ENCODE measurements at regions of chr7 and their contacts with region 1.

Region 1: GRCh38 chr7:18590744-18591340 is 95.3 kb downstream of the HDAC9 start:
- DNase-seq: peak; percentile 57
- H3K4me3 Mint-ChIP-seq: no peak overlapping the region
- H3K27ac Mint-ChIP-seq: no peak overlapping the region
- H3K4me1 Mint-ChIP-seq: no peaks in the 10 kb centered on the region
- H3K27me3 Mint-ChIP-seq: no peaks in the 10 kb centered on the region
- CTCF ChIP-seq: peak; percentile 54

Region 2: GRCh38 chr7:18481776-18482175 is 109.1 kb before region 1 on chr7:
- CTCF ChIA-PET with region 1: no interaction called
- POLR2A ChIA-PET with region 1: no interaction called
- intact Hi-C with region 1: no loop called
- DNase-seq: no peak
- H3K4me3 Mint-ChIP-seq: no peak overlapping the region
- H3K27ac Mint-ChIP-seq: no peak overlapping the region
- H3K4me1 Mint-ChIP-seq: no peaks in the 10 kb centered on the region
- H3K27me3 Mint-ChIP-seq: no peaks in the 10 kb centered on the region
- CTCF ChIP-seq: no peak

Region 3: GRCh38 chr7:18666107-18666728 is 75.4 kb after region 1 on chr7:
- CTCF ChIA-PET with region 1: interaction called, 17 read pairs
- POLR2A ChIA-PET with region 1: interaction called, 3 read pairs
- intact Hi-C with region 1: loop called (anchors 2 kb)
- DNase-seq: peak; percentile 80
- H3K4me3 Mint-ChIP-seq: no peak overlapping the region
- H3K27ac Mint-ChIP-seq: no peak overlapping the region
- H3K4me1 Mint-ChIP-seq: peaks cover under 1% of the 10 kb centered on the region
- H3K27me3 Mint-ChIP-seq: no peaks in the 10 kb centered on the region
- CTCF ChIP-seq: peak; percentile 71

Region 4: DNA sequence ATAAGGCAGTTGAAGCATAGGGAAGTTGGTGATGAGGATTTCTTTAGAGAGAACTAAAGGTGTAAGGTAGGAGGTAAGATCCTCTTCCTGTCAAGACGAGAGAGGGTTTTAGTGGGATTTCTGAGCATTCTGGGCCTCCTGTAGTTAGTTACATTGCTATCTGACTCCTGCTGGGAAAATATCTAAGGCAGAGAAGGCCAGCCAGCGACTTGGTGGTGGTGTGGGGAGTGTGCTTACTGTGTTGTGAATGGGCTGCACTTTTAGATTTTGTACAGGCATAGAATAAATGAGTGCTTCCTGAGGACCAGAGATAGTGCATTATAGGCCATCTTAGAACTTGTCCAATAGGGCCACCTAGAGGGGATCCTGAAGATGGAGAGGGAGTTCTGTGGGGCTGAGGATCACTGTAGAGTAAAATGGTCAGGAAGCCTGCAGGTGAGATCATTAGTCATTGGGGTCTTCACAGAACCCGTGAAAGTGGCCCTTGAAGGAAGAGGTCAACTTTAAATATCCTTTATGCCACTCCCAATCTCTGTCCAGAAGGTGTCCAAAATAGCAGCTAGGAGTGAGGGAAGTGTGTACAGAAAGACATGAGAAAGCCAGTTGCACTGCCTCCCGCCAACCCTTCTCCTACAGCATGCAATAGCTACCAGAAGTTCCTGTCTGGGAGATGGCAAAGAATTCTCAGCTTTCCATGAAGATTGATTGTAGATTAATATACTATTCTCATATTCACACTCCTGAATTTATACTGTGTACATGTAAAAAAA is 851.4 kb after region 1 on chr7:
- CTCF ChIA-PET with region 1: interaction called, 3 read pairs
- POLR2A ChIA-PET with region 1: no interaction called
- intact Hi-C with region 1: loop called (anchors 2 kb)
- DNase-seq: peak; percentile 67
- H3K4me3 Mint-ChIP-seq: no peak overlapping the region
- H3K27ac Mint-ChIP-seq: no peak overlapping the region
- H3K4me1 Mint-ChIP-seq: peaks cover 6% of the 10 kb centered on the region
- H3K27me3 Mint-ChIP-seq: no peaks in the 10 kb centered on the region
- CTCF ChIP-seq: peak; percentile 46

Region 5: GRCh38 chr7:19621740-19622139 is 1030.9 kb after region 1 on chr7:
- CTCF ChIA-PET with region 1: interaction called, 16 read pairs
- POLR2A ChIA-PET with region 1: interaction called, 4 read pairs
- intact Hi-C with region 1: loop called (anchors 5 kb)
- DNase-seq: peak; percentile 67
- H3K4me3 Mint-ChIP-seq: no peak overlapping the region
- H3K27ac Mint-ChIP-seq: peak overlapping the region; percentile 89
- H3K4me1 Mint-ChIP-seq: peaks cover 33% of the 10 kb centered on the region
- H3K27me3 Mint-ChIP-seq: no peaks in the 10 kb centered on the region
- CTCF ChIP-seq: peak; percentile 34

Measured in MCF 10A (cell line).